ENCODE measurements at regions of chr7 and their contacts with region 1.

Region 1: GRCh38 chr7:2012981-2013380 is 219.8 kb downstream of the MAD1L1 start:
- DNase-seq: peak in 1 of 2 donors; percentile 52
- H3K4me3 ChIP-seq: no peak overlapping the region
- CTCF ChIP-seq: no peak
- POLR2A ChIP-seq: no peak

Region 2: GRCh38 chr7:2079332-2080059 is 66.5 kb after region 1 on chr7:
- intact Hi-C with region 1: loop called (anchors 2 kb)
- DNase-seq: no peak
- H3K4me3 ChIP-seq: no peak overlapping the region
- CTCF ChIP-seq: no peak
- POLR2A ChIP-seq: no peak

Region 3: DNA sequence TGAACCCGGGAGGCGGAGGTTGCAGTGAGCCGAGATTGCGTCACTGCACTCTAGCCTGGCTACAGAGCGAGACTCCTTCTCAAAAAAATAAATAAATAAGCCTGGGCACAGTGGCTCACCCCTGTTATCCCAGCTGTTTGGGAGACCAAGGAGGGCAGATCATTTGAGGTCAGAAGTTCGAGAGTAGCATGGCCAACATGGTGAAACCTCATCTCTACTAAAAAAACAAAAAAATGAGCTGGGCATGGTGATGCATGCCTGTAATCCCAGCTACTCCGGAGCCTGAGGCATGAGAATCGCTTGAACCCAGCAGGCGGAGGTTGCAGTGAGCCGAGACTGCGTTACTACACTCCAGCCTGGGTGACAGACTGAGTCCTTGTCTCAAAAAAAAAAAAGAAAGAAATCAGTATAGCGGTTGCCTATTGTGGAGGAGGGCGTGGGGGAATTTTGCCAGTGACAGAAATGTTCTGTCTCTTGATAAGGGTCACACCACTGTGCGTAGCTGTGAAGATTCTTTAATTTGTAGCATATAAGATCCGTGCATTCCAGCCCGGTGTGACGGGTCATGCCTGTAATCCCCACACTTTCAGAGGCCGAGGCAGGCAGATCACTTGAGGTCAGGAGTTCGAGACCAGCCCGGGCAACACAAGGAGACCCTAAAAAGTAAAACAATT is 323.8 kb after region 1 on chr7:
- intact Hi-C with region 1: no loop called
- DNase-seq: no peak
- H3K4me3 ChIP-seq: no peak overlapping the region
- CTCF ChIP-seq: no peak
- POLR2A ChIP-seq: no peak

Measured in lower leg skin (tissue), 4 donors.